Panc1 (cell line): ENCODE measurements at regions of chr1 and their contacts with region 1.

Region 1: GRCh38 chr1:231252341-231252740 is 11.3 kb downstream of the GNPAT start:
- DNase-seq: no peak
- ATAC-seq: no peak
- H3K4me3 ChIP-seq: no peak overlapping the region
- H3K27ac ChIP-seq: no peak overlapping the region
- H3K4me1 ChIP-seq: no peaks in the 10 kb centered on the region; the same call in 1 of the 2 replicates
- H3K27me3 ChIP-seq: no peaks in the 10 kb centered on the region
- CTCF ChIP-seq: no peak

Region 2: GRCh38 chr1:230992100-230992774 is 260.1 kb before region 1 on chr1:
- CTCF ChIA-PET with region 1: no interaction called
- POLR2A ChIA-PET with region 1: no interaction called
- in situ Hi-C with region 1: no loop called
- intact Hi-C with region 1: no loop called
- DNase-seq: no peak
- ATAC-seq: no peak
- H3K4me3 ChIP-seq: no peak overlapping the region
- H3K27ac ChIP-seq: no peak overlapping the region
- H3K4me1 ChIP-seq: no peaks in the 10 kb centered on the region
- H3K27me3 ChIP-seq: no peaks in the 10 kb centered on the region
- CTCF ChIP-seq: no peak

Region 3: DNA sequence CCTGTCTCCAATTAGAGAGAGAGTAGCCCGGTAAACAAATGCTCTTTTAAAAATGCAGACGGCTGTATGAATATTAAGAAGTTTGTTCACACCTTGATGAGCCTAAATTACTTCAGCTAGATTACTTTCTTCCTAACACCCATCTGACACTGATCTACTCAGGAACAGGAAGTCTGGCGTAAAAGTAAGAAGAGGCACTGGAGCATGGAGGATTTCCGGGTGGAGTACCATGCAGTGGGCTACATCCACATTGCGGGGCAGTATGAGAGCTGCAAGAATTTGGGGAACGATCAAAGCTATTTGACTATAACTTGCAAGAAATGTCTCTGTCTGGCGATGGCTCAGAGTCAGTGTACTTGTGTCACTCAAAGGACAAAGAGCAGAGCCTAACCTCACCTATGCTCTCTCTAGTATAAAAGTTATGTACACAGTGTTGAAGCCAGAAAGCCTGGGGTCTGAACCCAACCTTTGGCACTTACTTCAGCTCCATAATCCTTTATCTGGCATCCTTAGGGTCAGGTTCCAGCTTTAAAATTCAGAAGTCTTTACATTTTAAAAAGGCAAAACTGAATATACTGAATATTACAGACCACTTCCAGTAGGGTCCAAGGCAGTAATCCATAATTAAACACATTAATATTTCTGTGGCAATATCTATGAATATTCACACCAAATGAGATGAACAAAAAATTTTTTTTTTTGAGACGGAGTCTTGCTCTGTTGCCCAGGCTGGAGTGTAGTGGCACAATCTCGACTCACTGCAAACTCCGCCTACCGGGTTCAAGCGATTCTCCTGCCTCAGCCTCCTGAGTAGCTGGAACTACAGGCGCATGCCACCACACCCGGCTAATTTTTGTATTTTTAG is 19.2 kb before region 1 on chr1:
- CTCF ChIA-PET with region 1: no interaction called
- POLR2A ChIA-PET with region 1: interaction called, 12 read pairs
- in situ Hi-C with region 1: no loop called
- intact Hi-C with region 1: no loop called
- DNase-seq: no peak
- ATAC-seq: no peak
- H3K4me3 ChIP-seq: no peak overlapping the region
- H3K27ac ChIP-seq: no peak overlapping the region
- H3K4me1 ChIP-seq: no peaks in the 10 kb centered on the region
- H3K27me3 ChIP-seq: no peaks in the 10 kb centered on the region
- CTCF ChIP-seq: no peak

Region 4: GRCh38 chr1:231322880-231323530 is 70.7 kb after region 1 on chr1:
- CTCF ChIA-PET with region 1: no interaction called
- POLR2A ChIA-PET with region 1: no interaction called
- in situ Hi-C with region 1: no loop called
- intact Hi-C with region 1: no loop called
- DNase-seq: no peak
- ATAC-seq: no peak
- H3K4me3 ChIP-seq: no peak overlapping the region
- H3K27ac ChIP-seq: no peak overlapping the region
- H3K4me1 ChIP-seq: no peaks in the 10 kb centered on the region
- H3K27me3 ChIP-seq: no peaks in the 10 kb centered on the region
- CTCF ChIP-seq: no peak

Region 5: DNA sequence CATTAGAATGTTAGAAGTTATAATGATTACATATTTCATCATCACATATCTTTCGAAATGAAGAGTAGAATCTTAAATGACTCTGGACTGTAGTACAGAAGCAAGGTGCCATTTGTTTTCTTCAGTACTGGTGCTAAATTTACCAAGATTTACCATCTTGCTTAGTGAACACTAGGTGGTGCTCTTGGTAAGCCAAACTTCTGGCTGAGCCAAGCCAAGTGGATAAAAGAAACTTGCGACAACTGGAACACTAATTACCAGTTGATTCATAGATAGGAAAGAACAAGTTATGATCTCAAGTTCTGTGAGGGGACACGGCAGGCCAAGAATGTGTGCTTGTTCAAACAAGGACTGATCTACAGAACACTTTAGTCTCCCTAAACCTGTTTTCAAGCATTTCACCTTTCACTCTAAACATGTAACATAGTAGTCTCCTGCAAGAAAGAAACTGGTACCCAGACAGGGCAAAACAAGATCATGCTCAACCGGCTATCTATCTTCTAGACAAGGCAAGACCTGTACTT is 105.6 kb after region 1 on chr1:
- CTCF ChIA-PET with region 1: no interaction called
- POLR2A ChIA-PET with region 1: no interaction called
- in situ Hi-C with region 1: no loop called
- intact Hi-C with region 1: no loop called
- DNase-seq: peak; percentile 57
- ATAC-seq: peak; percentile 93
- H3K4me3 ChIP-seq: no peak overlapping the region
- H3K27ac ChIP-seq: no peak overlapping the region
- H3K4me1 ChIP-seq: peaks cover 5% of the 10 kb centered on the region; the same call in 1 of the 2 replicates
- H3K27me3 ChIP-seq: no peaks in the 10 kb centered on the region
- CTCF ChIP-seq: peak; percentile 76

Region 6: GRCh38 chr1:232142403-232143314 is 890.3 kb after region 1 on chr1:
- CTCF ChIA-PET with region 1: no interaction called
- POLR2A ChIA-PET with region 1: no interaction called
- in situ Hi-C with region 1: no loop called
- intact Hi-C with region 1: no loop called
- DNase-seq: no peak
- ATAC-seq: no peak
- H3K4me3 ChIP-seq: no peak overlapping the region
- H3K27ac ChIP-seq: no peak overlapping the region
- H3K4me1 ChIP-seq: no peaks in the 10 kb centered on the region
- H3K27me3 ChIP-seq: no peaks in the 10 kb centered on the region
- CTCF ChIP-seq: no peak